AG04450 (cell line): ENCODE measurements at regions of chr19 and their contacts with region 1.

Region 1: GRCh38 chr19:58346961-58347931 is 6.0 kb downstream of the A1BG start:
- DNase-seq: no peak
- H3K4me3 ChIP-seq: peak overlapping the region; percentile 83
- H3K27ac ChIP-seq: peak overlapping the region; percentile 31
- H3K27me3 ChIP-seq: no peaks in the 10 kb centered on the region
- CTCF ChIP-seq: no peak

Region 2: DNA sequence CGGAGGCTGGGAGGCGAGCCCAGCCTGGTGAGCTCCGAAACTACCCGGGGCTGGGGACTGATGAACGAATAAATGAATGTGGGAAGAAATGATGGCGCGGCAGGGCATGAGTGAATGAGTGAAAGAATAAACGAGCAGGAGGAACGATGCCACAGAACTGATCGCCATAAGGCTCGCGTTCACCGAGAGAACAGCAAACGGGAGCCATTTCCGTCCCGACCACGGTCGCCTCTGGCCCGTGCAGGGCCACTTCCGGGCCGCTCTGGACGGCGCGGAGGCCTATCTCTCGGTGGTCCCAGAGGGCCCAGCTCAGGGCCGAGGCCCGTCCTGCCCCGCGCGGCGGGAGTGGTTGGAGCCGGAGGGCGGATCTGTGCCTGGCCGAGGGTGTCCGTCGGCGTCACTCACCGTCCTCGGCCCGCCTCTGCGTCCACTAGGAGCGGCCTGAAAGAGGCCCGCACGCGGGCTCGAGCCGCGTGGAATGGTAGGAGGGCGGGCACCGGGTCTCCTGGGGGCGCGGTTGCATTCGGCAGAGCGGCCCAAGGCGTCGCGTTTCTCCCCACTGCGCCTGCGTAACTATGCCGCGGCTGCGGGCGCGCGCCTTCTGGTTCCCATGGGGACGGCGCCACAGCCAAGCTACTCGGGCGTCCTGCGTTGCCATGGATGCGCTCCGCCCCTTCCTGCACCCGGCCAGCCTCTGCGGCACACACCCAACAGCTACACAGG is 15.2 kb after region 1 on chr19 and contains the start of gene ZNF497:
- CTCF ChIA-PET with region 1: no interaction called
- POLR2A ChIA-PET with region 1: interaction called, 17 read pairs
- DNase-seq: peak; percentile 88
- H3K4me3 ChIP-seq: peak within 1 kb of the TSS; percentile 77
- H3K27ac ChIP-seq: peak within 1 kb of the TSS; percentile 97
- H3K27me3 ChIP-seq: peaks cover 6% of the 10 kb centered on the region
- CTCF ChIP-seq: no peak; the same call in 1 of the 2 replicates
- polyA plus RNA-seq, gene ZNF497: 0.06 TPM in 2 replicates